MCF 10A (cell line): ENCODE measurements at regions of chr16 and their contacts with region 1.

Region 1: DNA sequence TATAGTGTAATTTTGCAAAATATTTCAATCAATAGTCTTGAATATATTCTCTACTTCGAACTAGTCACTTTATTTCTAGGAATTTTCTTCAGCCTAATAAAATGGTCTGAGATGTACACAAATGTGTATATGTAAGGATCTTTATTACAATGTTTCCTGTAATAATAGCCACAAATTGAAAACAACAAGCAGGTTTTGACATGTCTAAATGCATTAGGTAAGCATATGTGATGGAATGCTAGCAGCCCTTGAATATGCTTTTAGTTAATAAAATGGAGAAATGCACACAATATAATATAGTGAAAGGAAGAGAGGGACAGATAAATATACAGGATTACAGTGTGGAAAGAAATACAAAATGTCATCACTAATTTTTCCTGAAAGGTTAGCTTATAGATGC is 196.5 kb upstream of the IRX5 start:
- DNase-seq: no peak
- H3K4me3 Mint-ChIP-seq: no peak overlapping the region
- H3K27ac Mint-ChIP-seq: no peak overlapping the region
- H3K4me1 Mint-ChIP-seq: peaks cover 5% of the 10 kb centered on the region
- H3K27me3 Mint-ChIP-seq: no peaks in the 10 kb centered on the region
- CTCF ChIP-seq: no peak

Region 2: GRCh38 chr16:54595621-54596020 is 138.5 kb before region 1 on chr16:
- CTCF ChIA-PET with region 1: no interaction called
- POLR2A ChIA-PET with region 1: no interaction called
- intact Hi-C with region 1: no loop called
- DNase-seq: no peak
- H3K4me3 Mint-ChIP-seq: no peak overlapping the region
- H3K27ac Mint-ChIP-seq: no peak overlapping the region
- H3K4me1 Mint-ChIP-seq: no peaks in the 10 kb centered on the region
- H3K27me3 Mint-ChIP-seq: peaks cover 14% of the 10 kb centered on the region
- CTCF ChIP-seq: no peak

Region 3: GRCh38 chr16:54657058-54657708 is 77.0 kb before region 1 on chr16:
- CTCF ChIA-PET with region 1: no interaction called
- POLR2A ChIA-PET with region 1: interaction called, 10 read pairs
- intact Hi-C with region 1: no loop called
- DNase-seq: peak; percentile 98
- H3K4me3 Mint-ChIP-seq: peak overlapping the region; percentile 63
- H3K27ac Mint-ChIP-seq: peak overlapping the region; percentile 73
- H3K4me1 Mint-ChIP-seq: peaks cover 38% of the 10 kb centered on the region
- H3K27me3 Mint-ChIP-seq: no peaks in the 10 kb centered on the region
- CTCF ChIP-seq: no peak